Colonic mucosa (tissue), 4 donors: ENCODE measurements at regions of chr11 and their contacts with region 1.

Region 1: GRCh38 chr11:70270104-70270876 is at the start of gene PPFIA1:
- DNase-seq: peak; percentile 96
- H3K4me3 ChIP-seq: peak within 1 kb of the TSS; percentile 62
- H3K27ac ChIP-seq: peak within 1 kb of the TSS; percentile 86
- H3K4me1 ChIP-seq: no peaks in the 10 kb centered on the region
- H3K27me3 ChIP-seq: no peaks in the 10 kb centered on the region
- CTCF ChIP-seq: no peak
- total RNA-seq, gene PPFIA1: 46.9 to 47.5 TPM

Region 2: GRCh38 chr11:70048279-70049027 is 221.8 kb before region 1 on chr11:
- intact Hi-C with region 1: no loop called
- DNase-seq: peak; percentile 24
- H3K4me3 ChIP-seq: no peak overlapping the region
- H3K27ac ChIP-seq: no peak overlapping the region
- H3K4me1 ChIP-seq: no peaks in the 10 kb centered on the region
- H3K27me3 ChIP-seq: no peaks in the 10 kb centered on the region
- CTCF ChIP-seq: no peak

Region 3: GRCh38 chr11:70191495-70192140 is 78.7 kb before region 1 on chr11:
- intact Hi-C with region 1: no loop called
- DNase-seq: peak; percentile 72
- H3K4me3 ChIP-seq: no peak overlapping the region
- H3K27ac ChIP-seq: no peak overlapping the region
- H3K4me1 ChIP-seq: no peaks in the 10 kb centered on the region
- H3K27me3 ChIP-seq: no peaks in the 10 kb centered on the region
- CTCF ChIP-seq: peak; percentile 85

Region 4: GRCh38 chr11:70205051-70205725 is 65.1 kb before region 1 on chr11:
- intact Hi-C with region 1: loop called (anchors 5 kb)
- DNase-seq: no peak
- H3K4me3 ChIP-seq: no peak overlapping the region
- H3K27ac ChIP-seq: no peak overlapping the region
- H3K4me1 ChIP-seq: peaks cover 11% of the 10 kb centered on the region
- H3K27me3 ChIP-seq: no peaks in the 10 kb centered on the region
- CTCF ChIP-seq: no peak

Region 5: DNA sequence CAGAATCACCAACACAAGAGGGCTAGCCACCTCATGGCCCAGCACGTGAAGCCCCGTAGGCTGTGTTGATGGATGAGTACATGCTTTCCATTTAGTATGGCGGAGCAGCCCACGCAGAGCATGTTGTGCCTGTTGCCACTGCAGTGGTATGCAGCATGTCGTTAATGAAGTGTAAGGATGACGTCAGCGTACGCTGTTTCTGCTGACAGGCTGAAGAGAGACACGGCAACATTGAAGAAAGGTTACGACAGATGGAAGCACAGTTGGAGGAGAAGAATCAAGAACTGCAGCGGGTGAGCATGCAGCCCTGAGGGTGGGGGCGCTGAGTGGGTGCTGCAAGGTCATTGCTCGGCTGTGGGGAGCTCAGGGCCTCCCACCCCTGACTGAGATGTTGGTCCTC is 63.0 kb after region 1 on chr11:
- intact Hi-C with region 1: loop called (anchors 10 kb)
- DNase-seq: no peak
- H3K4me3 ChIP-seq: no peak overlapping the region
- H3K27ac ChIP-seq: no peak overlapping the region
- H3K4me1 ChIP-seq: no peaks in the 10 kb centered on the region
- H3K27me3 ChIP-seq: no peaks in the 10 kb centered on the region
- CTCF ChIP-seq: no peak